ENCODE measurements at regions of chr10 and their contacts with region 1.

Region 1: DNA sequence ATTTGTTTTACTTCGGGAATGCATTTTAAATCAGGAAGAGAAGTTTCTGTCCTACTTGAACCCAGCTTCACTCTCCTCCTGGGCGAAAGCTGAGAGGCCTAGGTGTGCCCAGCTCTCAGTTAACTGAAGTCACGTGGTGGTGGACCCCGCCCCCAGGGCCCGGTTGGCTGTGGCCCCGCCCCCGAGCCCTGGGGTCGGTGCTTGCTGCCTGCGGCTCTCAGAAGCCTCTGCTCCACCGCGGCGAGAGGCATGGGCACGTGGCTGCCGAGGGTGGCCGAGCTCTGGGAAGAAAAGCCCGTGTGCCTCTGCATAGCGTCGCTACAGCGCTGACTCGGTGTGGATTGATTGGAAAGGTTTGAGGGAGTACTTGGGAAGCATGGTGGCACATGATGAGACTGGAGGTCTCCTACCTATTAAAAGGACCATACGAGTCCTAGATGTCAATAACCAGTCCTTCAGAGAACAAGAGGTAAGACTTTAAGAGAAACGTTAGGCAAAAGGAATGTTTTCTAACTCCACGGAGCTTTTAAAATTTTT is 34.1 kb downstream of the NET1 start:
- DNase-seq: peak; percentile 97
- H3K4me3 Mint-ChIP-seq: peak overlapping the region; percentile 94
- H3K27ac Mint-ChIP-seq: peak overlapping the region; percentile 94
- H3K4me1 Mint-ChIP-seq: peaks cover 20% of the 10 kb centered on the region
- H3K27me3 Mint-ChIP-seq: no peaks in the 10 kb centered on the region
- CTCF ChIP-seq: no peak

Region 2: DNA sequence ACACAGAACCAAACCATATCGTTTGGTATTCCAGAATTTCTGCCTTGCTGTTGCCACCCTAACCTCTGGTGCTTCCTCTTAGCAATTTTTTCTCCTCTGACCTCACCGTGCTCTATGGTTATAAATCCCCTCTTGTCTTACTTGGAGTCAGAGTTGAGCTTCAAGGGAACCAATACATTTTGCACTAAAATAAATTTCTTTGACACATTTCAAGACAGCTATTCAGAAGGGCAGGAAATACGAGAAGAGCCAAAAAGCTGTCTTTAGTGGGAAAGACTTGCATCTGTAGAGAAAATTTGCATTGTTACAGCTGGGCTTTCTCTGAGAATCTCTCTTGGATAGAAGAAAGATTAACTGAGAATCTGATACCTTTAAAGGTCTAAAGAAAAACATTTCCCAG is 428.3 kb before region 1 on chr10:
- CTCF ChIA-PET with region 1: no interaction called
- intact Hi-C with region 1: no loop called
- DNase-seq: no peak
- H3K4me3 Mint-ChIP-seq: no peak overlapping the region
- H3K27ac Mint-ChIP-seq: peak overlapping the region; percentile 90
- H3K4me1 Mint-ChIP-seq: peaks cover 87% of the 10 kb centered on the region
- H3K27me3 Mint-ChIP-seq: no peaks in the 10 kb centered on the region
- CTCF ChIP-seq: no peak

Region 3: DNA sequence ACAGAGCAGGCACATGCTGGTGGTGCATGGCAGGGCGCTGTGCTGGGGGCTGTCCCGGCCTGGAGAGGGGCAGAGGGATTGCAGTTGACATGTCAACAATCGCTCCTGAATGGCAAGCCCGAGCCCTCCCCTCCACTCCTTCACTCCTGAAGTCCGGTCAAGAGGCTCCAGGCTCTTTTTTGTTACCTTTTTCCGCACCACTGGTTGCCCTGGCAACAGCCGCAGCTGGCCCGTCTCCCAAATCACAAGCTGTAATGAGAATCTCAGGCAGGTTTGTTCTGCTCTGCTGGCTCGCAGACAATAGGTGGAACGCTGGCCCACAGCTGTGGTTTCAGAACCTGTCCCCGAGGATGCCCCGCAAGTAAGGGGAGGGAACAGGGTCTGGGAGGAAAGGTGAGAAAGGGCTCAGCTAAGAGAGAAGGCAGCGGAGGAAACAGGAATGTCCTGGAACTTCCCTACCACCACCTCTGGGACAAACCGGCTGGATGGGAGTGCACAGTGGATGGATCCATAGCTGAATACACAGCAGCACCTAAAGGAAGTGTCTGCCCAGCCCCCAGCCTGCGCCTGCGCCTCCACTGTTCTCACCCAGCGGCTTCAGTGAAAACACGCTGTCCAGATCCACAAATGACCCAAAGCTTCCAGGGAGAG is 137.2 kb after region 1 on chr10:
- CTCF ChIA-PET with region 1: interaction called, 11 read pairs
- intact Hi-C with region 1: no loop called
- DNase-seq: no peak
- H3K4me3 Mint-ChIP-seq: no peak overlapping the region
- H3K27ac Mint-ChIP-seq: peak overlapping the region; percentile 19
- H3K4me1 Mint-ChIP-seq: peaks cover 38% of the 10 kb centered on the region
- H3K27me3 Mint-ChIP-seq: no peaks in the 10 kb centered on the region
- CTCF ChIP-seq: no peak

Region 4: GRCh38 chr10:5609952-5610616 is 163.6 kb after region 1 on chr10:
- CTCF ChIA-PET with region 1: interaction called, 3 read pairs
- intact Hi-C with region 1: loop called (anchors 1 kb)
- DNase-seq: peak; percentile 79
- H3K4me3 Mint-ChIP-seq: peak overlapping the region; percentile 44
- H3K27ac Mint-ChIP-seq: peak overlapping the region; percentile 71
- H3K4me1 Mint-ChIP-seq: peaks cover 35% of the 10 kb centered on the region
- H3K27me3 Mint-ChIP-seq: no peaks in the 10 kb centered on the region
- CTCF ChIP-seq: no peak

Region 5: GRCh38 chr10:5623081-5623748 is 176.8 kb after region 1 on chr10:
- CTCF ChIA-PET with region 1: interaction called, 18 read pairs
- intact Hi-C with region 1: loop called (anchors 1 kb)
- DNase-seq: peak; percentile 96
- H3K4me3 Mint-ChIP-seq: no peak overlapping the region
- H3K27ac Mint-ChIP-seq: no peak overlapping the region
- H3K4me1 Mint-ChIP-seq: peaks cover 8% of the 10 kb centered on the region
- H3K27me3 Mint-ChIP-seq: no peaks in the 10 kb centered on the region
- CTCF ChIP-seq: peak; percentile 93

Measured in Calu3 (cell line).